ENCODE measurements at regions of chr16 and their contacts with region 1.

Region 1: DNA sequence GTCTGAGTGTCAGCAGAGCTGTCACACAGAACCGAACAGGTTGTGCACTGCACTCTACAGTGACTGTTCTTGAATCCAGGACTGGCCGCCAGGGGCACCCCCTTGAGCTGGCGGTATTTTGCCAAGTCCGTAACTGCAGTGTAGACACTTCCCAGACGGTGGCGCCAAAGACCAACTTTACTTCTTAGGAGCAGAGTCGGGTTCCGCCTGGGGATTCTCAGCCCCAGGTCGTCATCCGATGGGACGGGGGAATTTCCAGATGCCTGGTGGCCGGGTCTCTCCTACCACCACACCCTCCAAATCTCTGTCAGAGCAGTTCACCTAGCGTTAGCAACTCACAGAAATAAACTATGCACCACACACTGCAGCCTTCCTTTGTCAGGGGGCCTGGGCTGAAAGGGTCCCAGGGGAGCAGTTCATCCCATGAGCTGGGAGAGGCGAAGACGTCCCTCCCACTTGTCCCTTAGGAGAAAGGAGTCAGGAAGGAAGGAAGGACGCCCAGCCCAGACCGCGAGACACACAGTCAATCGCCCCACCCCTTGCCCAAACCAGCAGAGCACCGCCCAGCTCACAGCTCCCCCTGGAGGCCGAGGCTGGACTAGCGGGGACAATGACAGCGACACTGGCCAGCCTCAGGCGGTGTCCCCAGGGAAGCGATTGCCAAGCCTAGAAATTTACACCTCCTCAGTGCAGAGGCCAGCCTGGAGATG is 7.4 kb upstream of the RIPOR1 start:
- DNase-seq: peak; percentile 99
- ATAC-seq: peak; percentile 94
- H3K4me3 Mint-ChIP-seq: peak overlapping the region; percentile 80
- H3K27ac Mint-ChIP-seq: peak overlapping the region; percentile 97
- H3K4me1 Mint-ChIP-seq: peaks cover 10% of the 10 kb centered on the region
- H3K27me3 Mint-ChIP-seq: no peaks in the 10 kb centered on the region

Region 2: GRCh38 chr16:67317853-67318252 is 203.4 kb before region 1 on chr16:
- CTCF ChIA-PET with region 1: no interaction called
- POLR2A ChIA-PET with region 1: no interaction called
- intact Hi-C with region 1: no loop called
- DNase-seq: no peak
- ATAC-seq: no peak
- H3K4me3 Mint-ChIP-seq: no peak overlapping the region
- H3K27ac Mint-ChIP-seq: no peak overlapping the region
- H3K4me1 Mint-ChIP-seq: peaks cover 9% of the 10 kb centered on the region
- H3K27me3 Mint-ChIP-seq: peaks cover 22% of the 10 kb centered on the region

Region 3: DNA sequence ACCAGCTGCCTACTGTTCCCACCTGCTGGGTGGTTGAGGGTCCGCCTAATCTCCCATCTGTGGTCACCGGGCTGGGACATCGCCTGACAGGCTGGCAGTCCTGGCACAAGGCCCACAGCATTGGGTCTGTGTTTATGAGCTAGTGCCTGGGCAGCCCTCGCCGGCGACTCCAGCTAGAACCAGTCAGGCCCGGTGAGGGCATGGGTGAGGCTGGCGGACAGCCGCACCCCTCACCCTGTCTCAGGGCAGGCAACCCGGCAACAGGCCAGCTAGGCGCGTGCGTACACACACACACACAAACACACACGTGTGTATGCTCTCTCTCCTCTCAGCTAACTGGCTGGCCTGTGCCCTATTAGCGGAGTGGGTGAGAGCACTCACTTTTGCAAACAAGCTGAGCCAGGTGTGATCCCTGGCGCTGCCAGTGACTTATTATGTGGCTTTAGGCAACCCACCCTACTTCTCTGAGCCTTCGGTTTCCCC is 79.9 kb before region 1 on chr16:
- CTCF ChIA-PET with region 1: no interaction called
- POLR2A ChIA-PET with region 1: no interaction called
- intact Hi-C with region 1: no loop called
- DNase-seq: no peak
- ATAC-seq: no peak
- H3K4me3 Mint-ChIP-seq: no peak overlapping the region
- H3K27ac Mint-ChIP-seq: no peak overlapping the region
- H3K4me1 Mint-ChIP-seq: peaks cover 3% of the 10 kb centered on the region
- H3K27me3 Mint-ChIP-seq: no peaks in the 10 kb centered on the region

Region 4: GRCh38 chr16:67509016-67509415 is 12.2 kb before region 1 on chr16:
- CTCF ChIA-PET with region 1: interaction called, 13 read pairs
- POLR2A ChIA-PET with region 1: no interaction called
- intact Hi-C with region 1: no loop called
- DNase-seq: no peak
- ATAC-seq: no peak
- H3K4me3 Mint-ChIP-seq: no peak overlapping the region
- H3K27ac Mint-ChIP-seq: no peak overlapping the region
- H3K4me1 Mint-ChIP-seq: peaks cover 40% of the 10 kb centered on the region
- H3K27me3 Mint-ChIP-seq: no peaks in the 10 kb centered on the region

Region 5: GRCh38 chr16:67555795-67556212 is 34.6 kb after region 1 on chr16:
- CTCF ChIA-PET with region 1: interaction called, 21 read pairs
- POLR2A ChIA-PET with region 1: interaction called, 5 read pairs
- intact Hi-C with region 1: no loop called
- DNase-seq: no peak
- ATAC-seq: peak; percentile 96
- H3K4me3 Mint-ChIP-seq: peak overlapping the region; percentile 48
- H3K27ac Mint-ChIP-seq: peak overlapping the region; percentile 97
- H3K4me1 Mint-ChIP-seq: peaks cover 49% of the 10 kb centered on the region
- H3K27me3 Mint-ChIP-seq: no peaks in the 10 kb centered on the region

Region 6: DNA sequence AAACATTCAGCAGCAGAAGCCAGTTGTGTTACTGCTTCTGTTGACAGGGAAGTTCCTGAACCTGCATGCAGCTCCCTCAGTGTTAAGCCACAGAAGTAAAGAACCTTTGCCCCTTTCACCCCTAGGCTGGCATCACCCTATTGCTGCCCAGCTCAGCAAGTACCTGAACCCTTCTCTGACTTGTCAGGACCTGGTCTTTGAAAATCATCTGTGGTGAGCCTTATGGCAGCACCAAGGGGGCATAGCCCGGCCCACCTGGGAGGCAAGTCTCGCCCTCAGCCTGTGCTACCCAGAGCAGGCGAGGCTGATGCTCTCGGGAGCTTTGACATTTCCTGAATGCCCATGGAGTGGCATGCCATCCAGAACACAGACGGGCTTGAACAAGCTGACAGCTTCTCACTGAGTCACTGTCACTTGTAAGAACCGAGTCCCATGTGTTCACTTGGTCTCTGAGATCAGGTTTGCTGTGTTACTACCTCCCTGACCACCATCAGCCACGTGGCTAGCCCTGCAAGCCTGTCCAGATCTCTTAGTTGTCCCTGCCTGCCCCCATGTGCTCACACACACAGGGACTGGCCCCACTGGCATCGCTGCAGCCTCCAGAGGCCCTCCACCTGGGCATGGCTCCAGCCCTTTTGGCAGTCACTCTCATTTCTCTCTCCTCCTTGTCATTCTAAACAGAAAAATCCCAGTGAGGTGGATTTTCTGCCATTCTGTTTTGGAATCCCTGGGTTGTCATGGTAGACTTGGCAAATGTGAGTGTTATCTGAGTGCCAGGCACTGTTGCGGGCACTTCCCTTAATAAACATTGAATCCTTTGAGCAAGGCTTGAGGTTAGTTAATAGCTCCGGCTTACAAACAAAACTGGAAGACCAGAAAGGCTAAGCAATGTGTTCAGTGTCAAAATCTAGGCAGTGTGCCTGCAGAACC is 120.8 kb after region 1 on chr16:
- CTCF ChIA-PET with region 1: interaction called, 75 read pairs
- POLR2A ChIA-PET with region 1: interaction called, 7 read pairs
- intact Hi-C with region 1: loop called (anchors 1 kb)
- DNase-seq: no peak
- ATAC-seq: no peak
- H3K4me3 Mint-ChIP-seq: no peak overlapping the region
- H3K27ac Mint-ChIP-seq: no peak overlapping the region
- H3K4me1 Mint-ChIP-seq: peaks cover 12% of the 10 kb centered on the region
- H3K27me3 Mint-ChIP-seq: no peaks in the 10 kb centered on the region

Region 7: DNA sequence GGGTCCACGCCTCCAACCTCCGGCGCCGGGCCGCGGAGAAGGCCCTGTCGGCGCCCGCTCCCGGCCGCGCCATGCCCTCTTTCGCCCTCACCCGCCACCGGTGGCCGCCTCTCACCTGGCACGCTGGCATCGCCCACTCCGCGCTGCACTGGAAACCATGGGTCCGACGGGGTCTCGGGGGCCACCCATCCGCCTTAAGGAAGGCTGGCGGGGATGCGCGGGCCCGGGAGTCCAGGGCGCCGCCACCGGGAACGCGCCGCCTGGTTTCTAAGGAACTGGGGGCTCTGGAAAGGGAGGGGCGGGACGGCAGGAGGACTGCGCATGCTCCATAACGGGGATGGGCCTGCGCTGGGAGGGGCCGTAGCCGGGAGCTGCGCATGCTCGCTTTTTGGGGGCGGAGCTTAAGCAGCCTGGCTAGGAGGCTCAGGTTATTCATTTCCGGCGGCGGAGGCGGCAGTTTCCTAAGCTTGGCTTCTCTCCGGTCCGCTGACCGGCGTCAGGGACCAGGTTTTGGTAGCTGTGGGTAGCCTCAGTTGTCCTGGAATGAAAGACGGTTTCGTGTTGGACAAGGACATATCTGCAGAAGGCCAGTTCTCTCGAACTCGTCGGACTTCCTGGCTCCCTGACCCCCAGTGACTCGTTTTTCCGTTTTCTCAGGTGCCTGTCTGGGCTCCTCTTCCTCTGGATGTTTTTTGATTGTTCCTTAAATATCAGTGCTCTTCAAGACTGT is 198.0 kb after region 1 on chr16 and contains the start of gene GFOD2:
- CTCF ChIA-PET with region 1: interaction called, 9 read pairs
- POLR2A ChIA-PET with region 1: interaction called, 3 read pairs
- intact Hi-C with region 1: loop called in 1 of 2 experiments (anchors 1 kb)
- DNase-seq: peak; percentile 99
- ATAC-seq: peak; percentile 95
- H3K4me3 Mint-ChIP-seq: peak within 1 kb of the TSS; percentile 82
- H3K27ac Mint-ChIP-seq: peak within 1 kb of the TSS; percentile 98
- H3K4me1 Mint-ChIP-seq: peaks cover 29% of the 10 kb centered on the region
- H3K27me3 Mint-ChIP-seq: no peaks in the 10 kb centered on the region
- total RNA-seq, gene GFOD2: 8.7 to 11.5 TPM

Region 8: DNA sequence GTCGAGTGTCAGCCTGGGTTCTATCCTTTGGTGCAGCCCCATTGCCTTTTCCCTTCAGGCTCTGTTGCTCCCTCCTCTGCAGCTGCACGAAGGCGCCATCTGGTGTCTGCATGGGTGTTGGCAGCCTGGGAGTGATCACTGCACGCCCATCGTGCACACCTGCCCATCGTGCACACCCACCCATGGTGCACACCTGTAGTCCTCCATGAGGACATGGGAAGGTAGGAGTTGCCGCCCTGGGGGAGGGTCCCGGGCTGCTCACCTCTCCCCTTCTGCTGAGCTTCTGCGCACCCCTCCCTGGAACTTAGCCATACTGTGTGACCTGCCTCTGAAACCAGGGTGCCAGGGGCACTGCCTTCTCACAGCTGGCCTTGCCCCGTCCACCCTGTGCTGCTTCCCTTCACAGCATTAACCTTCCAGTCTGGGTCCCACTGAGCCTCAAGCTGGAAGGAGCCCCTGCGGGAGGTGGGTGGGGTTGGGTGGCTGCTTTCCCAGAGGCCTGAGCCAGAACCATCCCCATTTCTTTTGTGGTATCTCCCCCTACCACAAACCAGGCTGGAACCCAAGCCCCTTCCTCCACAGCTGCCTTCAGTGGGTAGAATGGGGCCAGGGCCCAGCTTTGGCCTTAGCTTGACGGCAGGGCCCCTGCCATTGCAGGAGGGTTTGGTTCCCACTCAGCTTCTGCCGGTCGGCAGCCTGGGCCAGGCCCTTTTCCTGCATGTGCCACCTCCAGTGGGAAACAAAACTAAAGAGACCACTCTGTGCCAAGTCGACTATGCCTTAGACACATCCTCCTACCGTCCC is 407.5 kb after region 1 on chr16:
- CTCF ChIA-PET with region 1: interaction called, 4 read pairs
- POLR2A ChIA-PET with region 1: no interaction called
- intact Hi-C with region 1: loop called (anchors 1 kb)
- DNase-seq: peak; percentile 89
- ATAC-seq: peak; percentile 92
- H3K4me3 Mint-ChIP-seq: no peak overlapping the region
- H3K27ac Mint-ChIP-seq: no peak overlapping the region
- H3K4me1 Mint-ChIP-seq: no peaks in the 10 kb centered on the region
- H3K27me3 Mint-ChIP-seq: no peaks in the 10 kb centered on the region

Region 9: GRCh38 chr16:68490829-68491575 is 969.8 kb after region 1 on chr16:
- CTCF ChIA-PET with region 1: no interaction called
- POLR2A ChIA-PET with region 1: no interaction called
- intact Hi-C with region 1: no loop called
- DNase-seq: no peak
- ATAC-seq: no peak
- H3K4me3 Mint-ChIP-seq: no peak overlapping the region
- H3K27ac Mint-ChIP-seq: no peak overlapping the region
- H3K4me1 Mint-ChIP-seq: no peaks in the 10 kb centered on the region
- H3K27me3 Mint-ChIP-seq: no peaks in the 10 kb centered on the region

Measured in activated CD4-positive, alpha-beta T cell treated with anti-CD3 and anti-CD28 coated beads for 36 hours (primary cell).